ENCODE measurements at regions of chr13 and their contacts with region 1.

Region 1: GRCh38 chr13:23776698-23777574 is 112.3 kb downstream of the MIPEP start:
- DNase-seq: no peak
- ATAC-seq: peak; percentile 95
- H3K4me3 Mint-ChIP-seq: no peak overlapping the region
- H3K27ac Mint-ChIP-seq: no peak overlapping the region
- H3K4me1 Mint-ChIP-seq: peaks cover 26% of the 10 kb centered on the region
- H3K27me3 Mint-ChIP-seq: peaks cover 48% of the 10 kb centered on the region
- CTCF ChIP-seq: no peak

Region 2: DNA sequence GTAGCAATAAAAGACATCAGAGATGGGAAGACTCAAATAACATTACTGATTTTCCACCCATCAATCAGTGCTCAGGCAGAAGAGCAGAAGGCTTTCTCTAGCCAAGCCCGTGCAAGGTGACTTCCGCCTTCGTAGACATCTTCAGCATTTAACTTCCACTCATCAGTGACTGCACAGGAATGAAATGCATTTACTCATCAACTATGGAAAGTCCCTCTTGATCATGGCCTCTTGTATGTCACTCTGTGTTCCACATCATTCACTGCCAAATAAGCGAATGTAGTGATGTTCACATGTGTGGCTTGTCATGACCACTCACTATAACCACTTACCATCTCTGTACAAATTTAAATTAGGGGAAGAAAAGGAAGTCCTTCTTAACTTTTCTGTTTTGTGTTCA is 392.8 kb before region 1 on chr13:
- CTCF ChIA-PET with region 1: no interaction called
- POLR2A ChIA-PET with region 1: no interaction called
- intact Hi-C with region 1: loop called (anchors 1 kb)
- DNase-seq: no peak
- ATAC-seq: peak; percentile 98
- H3K4me3 Mint-ChIP-seq: peak overlapping the region; percentile 36
- H3K27ac Mint-ChIP-seq: peak overlapping the region; percentile 87
- H3K4me1 Mint-ChIP-seq: peaks cover 35% of the 10 kb centered on the region
- H3K27me3 Mint-ChIP-seq: no peaks in the 10 kb centered on the region
- CTCF ChIP-seq: no peak

Region 3: GRCh38 chr13:23845105-23845725 is 68.3 kb after region 1 on chr13:
- CTCF ChIA-PET with region 1: no interaction called
- POLR2A ChIA-PET with region 1: no interaction called
- intact Hi-C with region 1: loop called (anchors 2 kb)
- DNase-seq: no peak
- ATAC-seq: no peak
- H3K4me3 Mint-ChIP-seq: peak overlapping the region; percentile 15
- H3K27ac Mint-ChIP-seq: no peak overlapping the region
- H3K4me1 Mint-ChIP-seq: peaks cover 63% of the 10 kb centered on the region
- H3K27me3 Mint-ChIP-seq: no peaks in the 10 kb centered on the region
- CTCF ChIP-seq: no peak

Measured in activated B cell treated with CpG ODN at 0.5 μM for 24 hours (primary cell).